Activated CD4-positive, alpha-beta T cell treated with anti-CD3 and anti-CD28 coated beads for 36 hours (primary cell): ENCODE measurements at regions of chr20 and their contacts with region 1.

Region 1: DNA sequence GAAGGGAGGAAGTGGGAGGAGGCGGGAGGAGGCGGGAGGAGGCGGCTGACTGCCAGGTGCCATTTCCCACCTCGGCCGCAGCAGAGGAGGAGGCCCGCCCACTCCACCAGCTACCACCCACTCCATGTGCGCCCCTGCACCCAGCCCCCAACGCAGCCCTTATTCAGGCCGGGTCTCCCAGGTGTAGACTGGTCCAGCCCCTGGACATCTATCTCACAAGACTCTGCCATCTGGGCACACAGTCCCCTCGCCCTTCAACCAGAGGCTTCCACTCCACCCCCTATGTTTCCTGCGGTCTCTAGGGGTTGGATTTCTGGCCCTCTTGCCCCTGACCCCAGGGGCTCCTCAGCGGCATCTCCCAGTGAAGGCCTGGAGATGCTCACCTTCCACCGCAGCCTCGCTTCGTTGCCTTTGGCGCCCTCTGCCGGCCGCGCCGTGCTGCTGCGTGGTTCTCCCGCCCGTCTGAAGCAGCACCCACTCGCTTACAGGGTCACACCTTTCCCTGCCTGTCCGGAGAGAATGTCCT is 32.6 kb upstream of the FAM83D start:
- DNase-seq: peak; percentile 89
- ATAC-seq: peak; percentile 71
- H3K4me3 Mint-ChIP-seq: peak overlapping the region; percentile 37
- H3K27ac Mint-ChIP-seq: peak overlapping the region; percentile 88
- H3K4me1 Mint-ChIP-seq: peaks cover 54% of the 10 kb centered on the region
- H3K27me3 Mint-ChIP-seq: no peaks in the 10 kb centered on the region

Region 2: GRCh38 chr20:38633577-38634093 is 260.0 kb before region 1 on chr20:
- CTCF ChIA-PET with region 1: no interaction called
- POLR2A ChIA-PET with region 1: no interaction called
- intact Hi-C with region 1: loop called in 1 of 2 experiments (anchors 1 kb)
- DNase-seq: peak; percentile 79
- ATAC-seq: peak; percentile 95
- H3K4me3 Mint-ChIP-seq: no peak overlapping the region
- H3K27ac Mint-ChIP-seq: no peak overlapping the region
- H3K4me1 Mint-ChIP-seq: no peaks in the 10 kb centered on the region
- H3K27me3 Mint-ChIP-seq: peaks cover 10% of the 10 kb centered on the region

Region 3: GRCh38 chr20:38730989-38731737 is 162.5 kb before region 1 on chr20:
- CTCF ChIA-PET with region 1: interaction called, 4 read pairs
- POLR2A ChIA-PET with region 1: no interaction called
- intact Hi-C with region 1: loop called (anchors 1 to 5 kb)
- DNase-seq: peak; percentile 90
- ATAC-seq: peak; percentile 81
- H3K4me3 Mint-ChIP-seq: peak overlapping the region; percentile 50
- H3K27ac Mint-ChIP-seq: no peak overlapping the region
- H3K4me1 Mint-ChIP-seq: peaks cover 39% of the 10 kb centered on the region
- H3K27me3 Mint-ChIP-seq: peaks cover 88% of the 10 kb centered on the region

Region 4: DNA sequence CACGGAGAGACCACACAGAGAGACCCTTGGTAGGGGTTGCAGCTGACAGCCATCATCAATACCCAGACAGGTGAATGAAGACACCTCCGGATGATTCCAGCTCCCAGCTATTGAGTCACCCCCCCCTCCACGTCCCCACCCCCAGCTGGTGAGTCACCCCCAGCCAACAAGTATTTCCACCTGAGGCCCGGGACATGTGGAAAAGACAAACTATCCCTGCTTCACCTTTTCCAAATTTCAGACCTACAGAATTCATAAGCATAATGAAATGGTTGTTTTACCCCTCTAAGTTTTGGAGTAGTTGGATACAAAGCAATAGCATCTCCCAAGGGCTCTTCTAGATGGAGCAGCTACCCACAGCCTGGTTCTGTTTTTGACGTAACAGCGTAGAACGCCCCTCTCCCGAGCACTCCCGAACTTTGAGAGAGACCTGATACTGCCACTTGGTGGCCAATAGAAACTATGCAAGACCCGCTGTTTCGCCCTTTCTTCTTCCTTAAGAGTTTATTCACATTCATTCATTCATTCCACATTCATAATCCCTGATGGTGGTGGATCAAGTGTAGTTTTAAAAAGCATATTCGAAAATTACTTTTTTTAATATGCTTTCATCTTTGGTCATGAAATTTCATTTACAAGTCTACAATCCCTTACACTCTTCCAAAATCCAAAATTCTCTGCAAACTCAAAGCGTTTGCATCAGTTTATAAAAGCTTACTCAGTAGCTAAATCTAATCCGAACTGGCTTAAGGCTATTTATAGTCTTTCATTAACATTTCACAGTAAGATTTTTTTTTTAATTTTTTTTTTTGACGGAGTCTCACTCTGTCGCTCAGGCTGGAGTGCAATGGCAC is 103.2 kb before region 1 on chr20:
- CTCF ChIA-PET with region 1: interaction called, 12 read pairs
- POLR2A ChIA-PET with region 1: no interaction called
- intact Hi-C with region 1: loop called (anchors 1 to 5 kb)
- DNase-seq: peak; percentile 79
- ATAC-seq: peak; percentile 90
- H3K4me3 Mint-ChIP-seq: peak overlapping the region; percentile 13
- H3K27ac Mint-ChIP-seq: no peak overlapping the region
- H3K4me1 Mint-ChIP-seq: peaks cover 17% of the 10 kb centered on the region
- H3K27me3 Mint-ChIP-seq: no peaks in the 10 kb centered on the region

Region 5: DNA sequence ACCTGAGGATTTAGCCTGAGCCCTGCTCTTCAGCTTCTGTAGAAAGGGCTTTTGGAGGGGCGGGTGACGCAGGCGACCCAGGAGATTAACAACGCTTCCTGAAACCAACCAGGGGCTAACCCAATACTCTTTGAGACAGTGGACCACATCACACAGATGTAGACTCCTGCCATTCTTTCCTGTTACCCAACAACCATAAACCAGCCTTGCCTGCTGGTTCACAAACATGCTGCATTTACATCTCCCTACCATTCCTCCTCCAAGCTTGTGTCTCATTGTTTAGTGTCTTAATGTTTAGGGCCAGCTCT is 59.8 kb before region 1 on chr20:
- CTCF ChIA-PET with region 1: interaction called, 4 read pairs
- POLR2A ChIA-PET with region 1: no interaction called
- intact Hi-C with region 1: loop called in 1 of 2 experiments (anchors 2 kb)
- DNase-seq: peak; percentile 60
- ATAC-seq: peak; percentile 42
- H3K4me3 Mint-ChIP-seq: peak overlapping the region; percentile 8
- H3K27ac Mint-ChIP-seq: peak overlapping the region; percentile 95
- H3K4me1 Mint-ChIP-seq: peaks cover 72% of the 10 kb centered on the region
- H3K27me3 Mint-ChIP-seq: no peaks in the 10 kb centered on the region

Region 6: DNA sequence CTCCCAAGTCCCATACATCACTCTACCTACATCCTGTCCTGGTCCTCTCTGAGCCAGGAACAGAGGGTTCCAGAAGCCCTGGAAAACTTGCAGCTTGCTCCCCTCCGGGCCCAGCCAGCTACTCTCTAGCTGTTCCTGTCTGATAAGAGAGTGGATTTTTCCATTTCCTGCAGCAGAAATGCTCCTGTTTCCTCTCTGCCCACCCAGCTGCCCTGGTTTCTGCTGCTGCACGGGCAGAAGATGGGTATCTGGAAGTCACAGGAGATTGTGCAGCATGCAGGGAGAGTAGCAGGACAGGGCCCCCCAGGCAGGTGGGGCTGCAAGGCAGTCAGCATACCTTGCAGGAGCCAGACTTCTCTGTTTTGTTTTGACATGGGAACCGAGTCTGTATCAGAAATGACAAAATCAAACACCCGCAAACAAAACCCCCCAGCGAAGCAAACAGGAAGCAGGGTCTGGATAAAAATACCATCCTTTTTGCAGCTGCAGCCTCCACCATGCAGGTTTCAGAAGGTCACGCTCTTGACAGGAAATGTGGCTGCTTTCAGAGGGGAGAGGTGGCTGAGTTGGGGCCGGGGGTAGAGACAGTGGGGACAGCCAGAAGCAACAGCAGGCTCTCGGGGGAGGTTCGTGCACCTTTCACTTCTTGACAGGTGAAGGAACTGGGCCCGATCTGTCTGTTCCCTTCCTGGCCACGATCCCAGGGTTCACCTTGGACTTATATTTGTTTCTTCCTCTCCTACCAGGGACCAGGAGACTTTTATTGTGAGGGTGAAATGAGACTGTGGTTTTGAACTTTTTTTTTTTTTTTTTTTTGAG is 18.2 kb before region 1 on chr20:
- CTCF ChIA-PET with region 1: interaction called, 26 read pairs
- POLR2A ChIA-PET with region 1: interaction called, 3 read pairs
- intact Hi-C with region 1: loop called (anchors 1 kb)
- DNase-seq: peak; percentile 65
- ATAC-seq: peak; percentile 17
- H3K4me3 Mint-ChIP-seq: peak overlapping the region; percentile 63
- H3K27ac Mint-ChIP-seq: peak overlapping the region; percentile 96
- H3K4me1 Mint-ChIP-seq: peaks cover 89% of the 10 kb centered on the region
- H3K27me3 Mint-ChIP-seq: no peaks in the 10 kb centered on the region